RWPE1 (cell line): ENCODE measurements at regions of chr11 and their contacts with region 1.

Region 1: GRCh38 chr11:129331871-129332274 is 43.8 kb upstream of the BARX2 start:
- DNase-seq: peak; percentile 84
- H3K27ac ChIP-seq: no peak overlapping the region
- CTCF ChIP-seq: peak; percentile 90

Region 2: GRCh38 chr11:129106788-129107187 is 225.1 kb before region 1 on chr11:
- CTCF ChIA-PET with region 1: no interaction called
- POLR2A ChIA-PET with region 1: no interaction called
- DNase-seq: no peak
- H3K27ac ChIP-seq: no peak overlapping the region
- CTCF ChIP-seq: no peak

Region 3: DNA sequence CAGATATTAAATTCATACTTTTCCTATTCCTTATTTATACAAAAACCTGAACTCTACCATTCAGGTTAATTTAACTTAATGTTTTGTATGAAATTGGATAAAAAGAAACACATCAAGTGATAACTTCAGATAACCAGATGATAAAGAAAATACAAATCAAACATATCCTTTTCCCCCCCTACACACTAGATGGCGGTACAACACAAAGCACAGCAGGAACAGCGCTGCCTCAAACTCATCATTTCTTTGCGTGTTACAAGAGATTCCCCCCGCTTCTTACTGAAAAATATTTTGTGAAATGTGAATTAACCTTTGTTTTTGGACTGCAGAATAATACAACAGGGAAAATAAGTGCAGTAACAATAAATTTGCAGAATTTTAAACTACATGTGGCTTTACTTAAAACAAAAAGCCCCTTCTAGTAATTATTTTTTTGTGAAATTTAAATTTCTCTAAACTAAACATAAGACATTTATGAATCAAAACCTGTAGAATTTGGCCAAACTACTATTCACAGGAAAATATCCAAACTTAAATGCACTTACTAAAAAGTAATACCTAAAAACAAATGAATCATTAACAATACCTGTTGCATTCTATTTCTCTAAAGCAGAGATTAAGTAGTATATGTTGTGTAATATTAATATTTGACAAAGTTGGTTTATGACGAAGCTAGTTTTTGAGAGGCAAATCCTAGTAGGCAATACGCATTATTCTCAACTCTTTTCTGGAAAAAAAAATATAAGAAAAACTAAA is 214.1 kb before region 1 on chr11:
- CTCF ChIA-PET with region 1: interaction called, 19 read pairs
- POLR2A ChIA-PET with region 1: no interaction called
- DNase-seq: peak; percentile 59
- H3K27ac ChIP-seq: no peak overlapping the region
- CTCF ChIP-seq: peak; percentile 91

Region 4: DNA sequence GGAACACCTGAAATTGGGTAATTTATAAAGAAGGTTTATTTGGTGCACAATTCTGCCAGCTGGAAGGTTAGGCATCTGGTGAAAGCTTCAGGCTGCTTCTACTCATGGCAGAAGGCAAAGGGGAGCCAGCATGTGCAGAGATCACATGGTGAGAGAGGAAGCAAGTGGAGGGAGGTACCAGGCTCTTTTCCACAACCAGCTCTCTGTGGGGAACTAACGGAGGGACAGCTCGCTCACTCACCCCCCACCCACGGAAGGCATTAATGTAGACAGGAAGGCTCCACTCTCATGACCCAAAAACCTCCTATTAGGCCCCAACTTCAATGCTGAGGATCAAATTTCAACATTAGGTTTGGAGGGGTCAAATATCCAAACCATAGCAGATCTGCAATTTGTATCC is 64.2 kb before region 1 on chr11:
- CTCF ChIA-PET with region 1: no interaction called
- POLR2A ChIA-PET with region 1: no interaction called
- DNase-seq: no peak
- H3K27ac ChIP-seq: no peak overlapping the region
- CTCF ChIP-seq: no peak

Region 5: GRCh38 chr11:129315781-129316481 is 15.9 kb before region 1 on chr11:
- CTCF ChIA-PET with region 1: interaction called, 12 read pairs
- POLR2A ChIA-PET with region 1: interaction called, 8 read pairs
- DNase-seq: peak; percentile 59
- H3K27ac ChIP-seq: peak overlapping the region; percentile 25
- CTCF ChIP-seq: no peak